ENCODE measurements at regions of chr17 and their contacts with region 1.

Region 1: GRCh38 chr17:58631523-58632323 is 60.1 kb downstream of the TEX14 start:
- DNase-seq: peak; percentile 71 to 97
- H3K4me3 ChIP-seq: peak overlapping the region; percentile 40 to 57
- H3K27ac ChIP-seq: peak overlapping the region; percentile 80 to 85
- H3K4me1 ChIP-seq: no peaks in the 10 kb centered on the region
- H3K27me3 ChIP-seq: no peaks in the 10 kb centered on the region
- CTCF ChIP-seq: peak; percentile 5 to 27 (median 26)

Region 2: GRCh38 chr17:58112970-58113631 is 518.6 kb before region 1 on chr17:
- intact Hi-C with region 1: no loop called
- DNase-seq: peak; percentile 17 to 87
- H3K4me3 ChIP-seq: no peak overlapping the region
- H3K27ac ChIP-seq: no peak overlapping the region
- H3K4me1 ChIP-seq: no peaks in the 10 kb centered on the region
- H3K27me3 ChIP-seq: no peaks in the 10 kb centered on the region
- CTCF ChIP-seq: peak; percentile 88 to 98 (median 90)

Region 3: DNA sequence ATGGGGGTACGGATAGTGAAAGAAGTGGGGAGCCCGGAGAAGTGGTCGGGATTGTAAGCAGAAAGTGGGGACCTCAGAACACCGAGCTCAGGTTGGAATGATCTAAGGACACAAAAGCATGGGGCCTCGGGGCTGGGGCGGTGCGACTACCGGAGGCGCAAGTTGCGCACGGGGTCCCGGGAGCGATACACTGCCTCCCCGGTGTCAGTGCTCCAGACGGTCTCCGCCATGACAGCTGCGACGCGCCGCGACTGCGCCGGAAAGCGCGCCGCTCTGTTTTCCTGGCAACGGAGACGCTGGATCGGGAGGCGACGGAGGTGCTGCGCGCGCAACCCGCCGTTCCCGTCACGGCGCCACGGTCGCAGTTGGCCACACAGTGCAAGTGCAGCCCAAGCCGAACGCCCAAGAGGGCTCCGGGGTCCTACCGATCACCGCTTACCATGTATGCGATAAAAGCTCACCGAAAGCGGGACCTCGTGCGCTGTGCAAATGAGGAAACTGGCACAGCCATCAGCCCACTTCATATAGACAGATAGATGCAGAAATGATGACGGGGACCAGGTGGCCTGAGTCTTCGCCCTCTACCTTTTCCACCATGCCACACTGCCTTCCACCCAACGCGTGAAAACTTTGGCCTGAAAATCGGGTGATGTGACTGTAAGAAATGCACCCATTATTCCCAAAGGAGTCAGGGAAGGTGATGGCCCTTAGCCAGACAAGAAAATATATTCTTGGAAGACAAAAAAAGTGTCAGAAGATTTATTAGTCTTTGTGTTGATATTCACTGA is 412.5 kb before region 1 on chr17 and contains the start of gene MKS1:
- intact Hi-C with region 1: loop called (anchors 2 kb)
- DNase-seq: peak; percentile 70 to 97
- H3K4me3 ChIP-seq: peak within 1 kb of the TSS; percentile 58 to 65
- H3K27ac ChIP-seq: peak within 1 kb of the TSS; percentile 56 to 67
- H3K4me1 ChIP-seq: no peaks in the 10 kb centered on the region
- H3K27me3 ChIP-seq: no peaks in the 10 kb centered on the region
- CTCF ChIP-seq: peak; percentile 56 to 79 (median 75)
- total RNA-seq, gene MKS1: 1.5 TPM

Region 4: GRCh38 chr17:58531661-58532554 is 99.8 kb before region 1 on chr17:
- intact Hi-C with region 1: loop called (anchors 5 kb)
- DNase-seq: peak in 1 of 2 donors; percentile 82
- H3K4me3 ChIP-seq: peak overlapping the region; percentile 64
- H3K27ac ChIP-seq: peak overlapping the region; percentile 66 to 78
- H3K4me1 ChIP-seq: peaks cover 4 to 19% of the 10 kb centered on the region in 2 donors
- H3K27me3 ChIP-seq: no peaks in the 10 kb centered on the region
- CTCF ChIP-seq: no peak

Region 5: GRCh38 chr17:58577642-58578091 is 54.1 kb before region 1 on chr17:
- intact Hi-C with region 1: no loop called
- DNase-seq: no peak
- H3K4me3 ChIP-seq: no peak overlapping the region
- H3K27ac ChIP-seq: no peak overlapping the region
- H3K4me1 ChIP-seq: no peaks in the 10 kb centered on the region
- H3K27me3 ChIP-seq: no peaks in the 10 kb centered on the region
- CTCF ChIP-seq: peak in 2 of 3 experiments; percentile 22 to 48

Region 6: GRCh38 chr17:58658804-58659713 is 27.3 kb after region 1 on chr17:
- intact Hi-C with region 1: loop called (anchors 1 kb)
- DNase-seq: peak in 1 of 2 donors; percentile 81
- H3K4me3 ChIP-seq: peak overlapping the region; percentile 41 to 52
- H3K27ac ChIP-seq: peak overlapping the region; percentile 36 to 64
- H3K4me1 ChIP-seq: no peaks in the 10 kb centered on the region
- H3K27me3 ChIP-seq: no peaks in the 10 kb centered on the region
- CTCF ChIP-seq: no peak

Region 7: DNA sequence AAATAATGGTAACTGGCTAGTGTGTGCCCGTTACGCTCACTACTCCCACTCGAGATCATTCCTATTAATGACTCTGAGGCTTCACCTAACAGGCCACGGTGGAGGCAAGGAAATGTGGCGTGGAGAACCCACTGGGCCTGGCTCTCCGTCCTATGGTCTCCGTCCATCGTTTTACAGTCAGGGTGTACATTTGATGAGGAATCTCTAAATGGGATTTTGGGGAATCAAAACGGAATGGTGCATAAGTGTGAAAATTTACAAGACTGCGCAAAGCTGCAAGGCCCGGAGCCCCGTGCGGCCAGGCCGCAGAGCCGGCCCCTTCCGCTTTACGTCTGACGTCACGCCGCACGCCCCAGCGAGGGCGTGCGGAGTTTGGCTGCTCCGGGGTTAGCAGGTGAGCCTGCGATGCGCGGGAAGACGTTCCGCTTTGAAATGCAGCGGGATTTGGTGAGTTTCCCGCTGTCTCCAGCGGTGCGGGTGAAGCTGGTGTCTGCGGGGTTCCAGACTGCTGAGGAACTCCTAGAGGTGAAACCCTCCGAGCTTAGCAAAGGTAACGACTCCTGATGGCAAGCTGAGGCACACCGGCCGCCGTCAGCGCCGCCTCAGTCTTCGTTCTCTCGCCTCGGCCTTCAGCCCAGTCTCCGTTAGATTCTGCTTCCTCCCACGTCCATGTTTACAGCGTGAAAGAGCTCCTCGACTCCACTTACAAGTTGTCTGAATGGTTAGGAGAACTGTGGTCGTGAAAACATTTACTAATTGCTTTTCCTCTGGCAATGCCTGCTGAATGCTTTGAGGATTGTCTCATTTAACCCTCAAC is 60.7 kb after region 1 on chr17 and contains the start of gene RAD51C:
- intact Hi-C with region 1: loop called (anchors 2 kb)
- DNase-seq: peak; percentile 11 to 86
- H3K4me3 ChIP-seq: peak within 1 kb of the TSS; percentile 60 to 73
- H3K27ac ChIP-seq: peak within 1 kb of the TSS; percentile 73 to 84
- H3K4me1 ChIP-seq: peaks cover 4 to 8% of the 10 kb centered on the region in 2 donors
- H3K27me3 ChIP-seq: no peaks in the 10 kb centered on the region
- CTCF ChIP-seq: no peak
- total RNA-seq, gene RAD51C: 6.8 TPM

Measured in ascending aorta (tissue), 2 donors.